Activated T-helper 2 cell treated with anti-CD3 and anti-CD28 coated beads, Interferon-gamma antibody, Interleukin-2, Interleukin-4, amounts not matched to agents 10 μg/mL and 5 μg/mL and 100 μg/mL, durations not matched to agents 14 hours and 24 hours and 36 hours (primary cell): ENCODE measurements at regions of chr22 and their contacts with region 1.

Region 1: DNA sequence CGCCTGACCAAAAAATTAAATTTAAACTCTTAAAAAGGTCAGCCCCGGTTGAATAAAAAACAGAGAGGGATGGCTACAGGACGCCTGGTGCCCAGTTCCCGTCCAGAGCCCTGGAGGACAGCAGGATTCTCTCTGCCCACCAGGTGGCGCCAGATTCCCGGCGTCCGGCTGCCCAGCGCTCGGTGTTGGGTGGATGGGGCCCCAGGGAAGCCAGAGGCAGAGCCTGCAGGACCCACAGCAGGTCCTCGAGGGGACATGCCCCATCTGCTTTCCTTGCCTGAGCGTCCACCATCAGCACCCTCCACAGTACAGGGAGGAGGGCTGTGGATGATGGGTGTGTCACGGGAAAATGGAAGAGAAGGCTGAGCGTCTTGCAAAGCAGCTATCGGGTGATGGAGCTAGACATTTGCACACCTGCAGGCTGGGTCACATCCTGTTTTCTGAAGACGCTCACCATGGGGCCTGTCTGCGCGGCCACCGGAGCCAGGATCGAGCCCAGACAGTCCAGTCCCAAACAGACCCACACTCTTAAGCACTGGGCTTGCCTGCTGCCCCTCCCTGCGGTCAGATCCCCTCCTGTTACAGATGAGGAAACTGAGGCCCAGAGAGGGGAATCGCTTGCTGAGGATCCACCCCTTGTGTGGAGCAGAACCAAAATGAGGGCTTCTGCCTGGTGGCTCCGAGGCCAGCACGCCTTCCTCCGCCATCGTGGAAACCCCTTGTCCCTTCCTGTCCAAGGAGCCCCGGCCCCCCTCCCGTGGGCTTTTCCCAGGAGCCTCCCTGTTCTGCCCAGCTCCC is 18.5 kb upstream of the CBX7 start:
- DNase-seq: peak; percentile 75
- H3K4me3 Mint-ChIP-seq: peak overlapping the region; percentile 42
- H3K27ac Mint-ChIP-seq: no peak overlapping the region
- H3K4me1 Mint-ChIP-seq: peaks cover 23% of the 10 kb centered on the region
- H3K27me3 Mint-ChIP-seq: peaks cover 6% of the 10 kb centered on the region

Region 2: GRCh38 chr22:39183991-39184585 is 13.1 kb after region 1 on chr22:
- intact Hi-C with region 1: no loop called
- DNase-seq: no peak
- H3K4me3 Mint-ChIP-seq: no peak overlapping the region
- H3K27ac Mint-ChIP-seq: no peak overlapping the region
- H3K4me1 Mint-ChIP-seq: no peaks in the 10 kb centered on the region
- H3K27me3 Mint-ChIP-seq: peaks cover 2% of the 10 kb centered on the region

Region 3: DNA sequence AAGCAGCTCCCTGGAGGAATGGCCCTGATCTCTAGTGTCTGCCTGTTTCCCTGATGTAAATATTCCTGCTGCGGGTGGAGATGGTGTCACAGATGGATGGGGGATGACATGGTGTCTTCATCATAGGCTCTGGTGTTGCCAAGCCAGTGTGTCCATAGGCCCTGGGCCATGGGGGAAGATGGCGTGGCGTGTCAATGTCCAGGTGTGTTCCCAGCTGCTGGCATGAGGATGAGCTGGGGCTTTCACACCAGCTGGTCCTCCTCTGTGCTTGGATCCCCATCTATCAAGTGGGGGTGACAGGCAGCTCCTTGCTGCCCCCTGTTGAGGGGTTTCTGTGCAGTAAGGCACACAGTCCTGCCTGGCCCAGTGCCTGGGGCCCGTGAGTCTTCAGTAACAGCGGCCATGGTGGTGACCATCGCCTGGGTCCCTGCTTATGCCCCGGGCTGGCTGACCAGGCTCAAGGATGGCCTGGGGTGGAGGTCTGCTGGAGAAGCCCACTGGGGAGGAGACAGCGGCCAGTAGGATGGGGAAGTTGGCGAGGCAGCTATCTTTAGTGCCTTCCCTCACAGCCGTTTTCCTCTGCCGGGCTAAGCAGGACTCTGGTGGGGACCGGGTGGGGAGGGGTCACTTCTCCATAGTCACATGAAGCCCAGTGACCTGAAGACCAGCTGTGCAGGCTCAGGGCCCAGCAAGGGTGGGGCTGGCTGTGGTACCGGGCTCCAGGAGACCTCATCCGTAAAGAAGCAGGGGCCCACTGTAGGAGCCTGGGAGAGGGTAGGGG is 135.7 kb after region 1 on chr22:
- intact Hi-C with region 1: loop called (anchors 1 kb)
- DNase-seq: peak; percentile 35
- H3K4me3 Mint-ChIP-seq: no peak overlapping the region
- H3K27ac Mint-ChIP-seq: no peak overlapping the region
- H3K4me1 Mint-ChIP-seq: peaks cover 4% of the 10 kb centered on the region
- H3K27me3 Mint-ChIP-seq: no peaks in the 10 kb centered on the region